Naive thymus-derived CD4-positive, alpha-beta T cell (primary cell): ENCODE measurements at regions of chr1 and their contacts with region 1.

Region 1: GRCh38 chr1:2525920-2526823 is at the start of gene PANK4:
- DNase-seq: peak; percentile 80 to 90 (median 89)
- ATAC-seq: peak; percentile 95
- H3K4me3 ChIP-seq: peak within 1 kb of the TSS; percentile 65
- H3K4me3 Mint-ChIP-seq: peak within 1 kb of the TSS; percentile 88 to 100 (median 94)
- H3K27ac ChIP-seq: peak within 1 kb of the TSS; percentile 81
- H3K27ac Mint-ChIP-seq: peak within 1 kb of the TSS; percentile 87 to 98 (median 96)
- H3K4me1 ChIP-seq: peaks cover 44 to 47% of the 10 kb centered on the region in 2 donors
- H3K4me1 Mint-ChIP-seq: peaks cover 32 to 57% (median 44%) of the 10 kb centered on the region in 7 donors
- H3K27me3 ChIP-seq: peaks cover 4 to 7% of the 10 kb centered on the region in 2 donors
- H3K27me3 Mint-ChIP-seq: peaks cover 0 to 27% (median 0%) of the 10 kb centered on the region in 5 donors
- total RNA-seq, gene PANK4: 55.8 to 91.2 (median 72.6) TPM

Region 2: GRCh38 chr1:1777950-1778662 is 748.1 kb before region 1 on chr1 and contains the start of gene NADK:
- CTCF ChIA-PET with region 1: no interaction called
- POLR2A ChIA-PET with region 1: no interaction called
- intact Hi-C with region 1: loop called in 1 of 2 experiments (anchors 5 kb)
- DNase-seq: peak; percentile 59 to 92 (median 79)
- ATAC-seq: peak; percentile 62
- H3K4me3 ChIP-seq: peak within 1 kb of the TSS; percentile 74
- H3K4me3 Mint-ChIP-seq: peak within 1 kb of the TSS; percentile 84 to 95 (median 90)
- H3K27ac ChIP-seq: peak within 1 kb of the TSS; percentile 81
- H3K27ac Mint-ChIP-seq: peak within 1 kb of the TSS; percentile 94 to 97 (median 95)
- H3K4me1 ChIP-seq: peaks cover 47 to 61% of the 10 kb centered on the region in 2 donors
- H3K4me1 Mint-ChIP-seq: peaks cover 51 to 65% (median 59%) of the 10 kb centered on the region in 7 donors
- H3K27me3 ChIP-seq: no peaks in the 10 kb centered on the region
- H3K27me3 Mint-ChIP-seq: no peaks in the 10 kb centered on the region
- total RNA-seq, gene NADK: 45.2 to 115 (median 50.3) TPM

Region 3: GRCh38 chr1:2205191-2205952 is 320.8 kb before region 1 on chr1:
- CTCF ChIA-PET with region 1: no interaction called
- POLR2A ChIA-PET with region 1: no interaction called
- intact Hi-C with region 1: loop called (anchors 1 to 2 kb)
- DNase-seq: peak; percentile 86 to 94 (median 93)
- ATAC-seq: peak; percentile 98
- H3K4me3 ChIP-seq: peak overlapping the region; percentile 70
- H3K4me3 Mint-ChIP-seq: peak overlapping the region; percentile 53 to 79 (median 68)
- H3K27ac ChIP-seq: peak overlapping the region; percentile 60
- H3K27ac Mint-ChIP-seq: peak overlapping the region in 5 of 9 donors; percentile 17 to 65 (median 56)
- H3K4me1 ChIP-seq: peaks cover 0 to 6% of the 10 kb centered on the region in 2 donors
- H3K4me1 Mint-ChIP-seq: peaks cover 0 to 9% (median 4%) of the 10 kb centered on the region in 7 donors
- H3K27me3 ChIP-seq: no peaks in the 10 kb centered on the region
- H3K27me3 Mint-ChIP-seq: peaks cover 0 to 4% (median 0%) of the 10 kb centered on the region in 5 donors

Region 4: GRCh38 chr1:2412519-2413233 is 113.5 kb before region 1 on chr1 and contains the start of gene PEX10:
- CTCF ChIA-PET with region 1: interaction called, 13 read pairs
- POLR2A ChIA-PET with region 1: interaction called, 26 read pairs
- intact Hi-C with region 1: loop called (anchors 1 kb)
- DNase-seq: peak; percentile 95 to 100 (median 98)
- ATAC-seq: peak; percentile 97
- H3K4me3 ChIP-seq: peak within 1 kb of the TSS; percentile 71
- H3K4me3 Mint-ChIP-seq: peak within 1 kb of the TSS; percentile 83 to 91 (median 86)
- H3K27ac ChIP-seq: peak within 1 kb of the TSS; percentile 95
- H3K27ac Mint-ChIP-seq: peak within 1 kb of the TSS; percentile 31 to 94 (median 87)
- H3K4me1 ChIP-seq: peaks cover 37 to 45% of the 10 kb centered on the region in 2 donors
- H3K4me1 Mint-ChIP-seq: peaks cover 27 to 45% (median 35%) of the 10 kb centered on the region in 7 donors
- H3K27me3 ChIP-seq: no peaks in the 10 kb centered on the region
- H3K27me3 Mint-ChIP-seq: no peaks in the 10 kb centered on the region
- total RNA-seq, gene PEX10: 8.7 to 14.9 (median 12.3) TPM

Region 5: DNA sequence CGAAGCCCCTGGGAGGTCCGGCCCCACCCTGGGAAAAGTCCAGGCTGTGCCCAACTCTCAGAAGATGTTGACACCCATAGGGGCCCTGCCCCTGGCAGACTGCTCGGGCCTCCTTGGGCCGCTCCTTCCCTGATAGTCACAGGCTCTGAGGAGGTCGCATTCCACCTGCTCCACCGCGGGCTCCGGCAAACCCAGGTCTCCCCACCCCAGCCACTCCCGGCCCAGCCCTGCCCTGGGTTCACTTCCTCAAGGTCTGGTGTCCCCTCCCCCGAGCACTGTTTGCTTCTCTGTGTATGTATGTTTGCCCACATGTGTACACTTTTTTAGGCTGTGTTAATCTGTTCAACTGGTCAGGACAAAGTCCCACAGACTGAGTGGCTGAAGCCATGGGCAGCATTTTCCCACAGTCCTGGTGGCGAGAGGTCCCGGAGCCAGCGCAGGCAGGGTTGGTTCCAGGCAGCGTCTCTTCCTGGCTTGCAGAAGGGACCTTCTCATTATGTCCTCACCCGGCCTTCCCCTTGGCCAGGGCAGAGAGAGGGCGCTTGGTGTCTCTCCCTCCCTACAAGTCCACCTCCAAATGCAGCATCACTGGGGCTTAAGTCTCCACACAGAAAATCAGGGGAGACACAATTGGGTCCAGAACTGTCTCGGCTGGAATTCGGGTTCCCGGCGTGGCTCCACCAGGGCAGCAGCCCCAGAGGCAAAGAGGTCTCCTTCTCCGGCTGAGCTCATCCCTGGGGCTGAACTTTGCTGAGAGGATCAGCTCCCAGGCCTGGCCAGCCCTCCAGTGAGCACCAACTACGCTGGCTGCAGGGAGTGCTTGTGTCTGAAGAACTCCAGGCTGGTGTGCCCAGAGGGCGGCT is 49.9 kb after region 1 on chr1:
- CTCF ChIA-PET with region 1: no interaction called
- POLR2A ChIA-PET with region 1: interaction called, 7 read pairs
- intact Hi-C with region 1: loop called in 1 of 2 experiments (anchors 1 kb)
- DNase-seq: no peak
- ATAC-seq: no peak
- H3K4me3 ChIP-seq: no peak overlapping the region
- H3K4me3 Mint-ChIP-seq: peak overlapping the region in 3 of 10 donors; percentile 25 to 76 (median 35)
- H3K27ac ChIP-seq: peak overlapping the region; percentile 8
- H3K27ac Mint-ChIP-seq: peak overlapping the region in 7 of 9 donors; percentile 43 to 96 (median 62)
- H3K4me1 ChIP-seq: peaks cover 20 to 33% of the 10 kb centered on the region in 2 donors
- H3K4me1 Mint-ChIP-seq: peaks cover 23 to 59% (median 48%) of the 10 kb centered on the region in 7 donors
- H3K27me3 ChIP-seq: no peaks in the 10 kb centered on the region
- H3K27me3 Mint-ChIP-seq: no peaks in the 10 kb centered on the region

Region 6: DNA sequence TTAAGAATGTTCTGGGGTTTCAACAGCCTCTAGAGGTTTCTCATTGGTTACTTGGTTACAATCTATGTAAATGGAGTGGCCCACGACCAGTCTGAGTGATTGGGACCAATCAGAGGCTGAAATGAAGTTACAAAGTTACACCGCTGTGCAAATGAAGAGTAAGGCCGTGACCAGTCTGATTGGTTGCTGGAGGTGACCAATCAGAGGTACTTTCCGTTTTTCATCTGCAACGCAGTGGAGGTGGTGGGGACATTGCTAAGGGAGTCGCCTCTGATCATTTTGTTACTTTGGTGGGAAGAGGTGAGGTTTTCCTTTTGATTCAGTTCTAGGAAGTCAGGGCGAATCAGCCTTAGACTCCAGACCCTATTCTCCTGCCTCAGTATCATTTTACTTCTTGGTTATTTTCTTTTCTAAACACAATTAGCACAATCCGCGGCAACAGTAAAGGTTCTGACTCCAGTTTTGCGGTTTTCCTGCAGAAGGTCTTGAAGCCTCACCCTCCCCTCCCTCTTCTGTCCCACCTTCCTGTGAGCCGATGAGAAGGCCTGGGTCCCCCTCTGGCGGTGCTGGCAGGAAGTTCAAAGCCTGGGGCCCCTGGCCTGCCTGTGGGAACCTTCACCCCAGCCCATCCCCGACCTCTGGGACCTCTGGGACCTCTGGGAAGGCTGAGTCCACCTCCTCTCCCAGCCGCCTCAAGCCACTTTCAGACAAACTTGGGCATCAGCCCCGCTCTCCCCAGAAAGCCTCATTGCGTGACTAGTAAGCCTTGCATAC is 314.1 kb after region 1 on chr1:
- CTCF ChIA-PET with region 1: no interaction called
- POLR2A ChIA-PET with region 1: no interaction called
- intact Hi-C with region 1: loop called in 1 of 2 experiments (anchors 1 kb)
- DNase-seq: peak in 8 of 9 donors; percentile 43 to 87 (median 82)
- ATAC-seq: peak; percentile 89
- H3K4me3 ChIP-seq: peak overlapping the region; percentile 31
- H3K4me3 Mint-ChIP-seq: peak overlapping the region; percentile 49 to 88 (median 78)
- H3K27ac ChIP-seq: peak overlapping the region; percentile 60
- H3K27ac Mint-ChIP-seq: peak overlapping the region; percentile 40 to 92 (median 90)
- H3K4me1 ChIP-seq: peaks cover 10 to 17% of the 10 kb centered on the region in 2 donors
- H3K4me1 Mint-ChIP-seq: peaks cover 11 to 24% (median 23%) of the 10 kb centered on the region in 7 donors
- H3K27me3 ChIP-seq: no peaks in the 10 kb centered on the region
- H3K27me3 Mint-ChIP-seq: peaks cover 0 to 4% (median 0%) of the 10 kb centered on the region in 5 donors